Activated T-helper 2 cell treated with anti-CD3 and anti-CD28 coated beads, Interferon-gamma antibody, Interleukin-2, Interleukin-4, amounts not matched to agents 10 μg/mL and 5 μg/mL and 100 μg/mL, durations not matched to agents 14 hours and 24 hours and 36 hours (primary cell): ENCODE measurements at regions of chr9 and their contacts with region 1.

Region 1: DNA sequence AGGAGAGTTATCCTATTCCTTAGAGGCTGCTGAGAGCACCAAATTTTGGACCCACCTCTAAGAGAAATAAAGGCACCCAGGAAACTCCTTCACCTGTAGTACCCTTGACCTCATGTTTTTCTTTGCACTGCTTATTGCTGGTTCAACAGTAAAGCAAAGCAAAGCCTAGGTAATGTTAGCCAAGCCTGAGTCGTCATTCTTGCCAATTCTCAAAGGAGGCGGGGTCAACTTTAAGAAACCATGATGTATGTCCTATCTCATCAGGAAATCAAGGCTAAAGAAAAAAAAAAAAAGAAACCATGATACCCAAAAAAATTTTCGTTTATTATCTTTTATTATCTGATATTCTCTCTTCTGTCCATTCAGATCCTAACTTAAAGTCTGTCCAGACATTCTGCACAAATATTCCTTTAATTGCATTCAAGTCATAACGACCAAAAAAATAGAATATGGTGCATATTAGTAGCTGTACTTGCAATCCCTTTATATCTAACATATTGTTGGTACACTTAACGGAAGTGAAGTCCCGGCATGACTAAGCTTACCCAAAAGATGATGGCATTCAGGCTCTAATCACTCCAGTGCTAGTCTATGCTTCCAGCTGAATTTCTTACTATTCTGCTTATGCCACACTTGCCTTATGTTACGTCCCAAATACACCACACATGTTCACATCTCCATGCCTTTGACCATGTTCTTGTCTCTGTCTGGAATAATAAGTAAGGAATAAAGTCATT is 1.8 kb downstream of the AUH start:
- DNase-seq: no peak
- H3K4me3 Mint-ChIP-seq: peak overlapping the region; percentile 98
- H3K27ac Mint-ChIP-seq: peak overlapping the region; percentile 99
- H3K4me1 Mint-ChIP-seq: peaks cover 64% of the 10 kb centered on the region
- H3K27me3 Mint-ChIP-seq: no peaks in the 10 kb centered on the region

Region 2: DNA sequence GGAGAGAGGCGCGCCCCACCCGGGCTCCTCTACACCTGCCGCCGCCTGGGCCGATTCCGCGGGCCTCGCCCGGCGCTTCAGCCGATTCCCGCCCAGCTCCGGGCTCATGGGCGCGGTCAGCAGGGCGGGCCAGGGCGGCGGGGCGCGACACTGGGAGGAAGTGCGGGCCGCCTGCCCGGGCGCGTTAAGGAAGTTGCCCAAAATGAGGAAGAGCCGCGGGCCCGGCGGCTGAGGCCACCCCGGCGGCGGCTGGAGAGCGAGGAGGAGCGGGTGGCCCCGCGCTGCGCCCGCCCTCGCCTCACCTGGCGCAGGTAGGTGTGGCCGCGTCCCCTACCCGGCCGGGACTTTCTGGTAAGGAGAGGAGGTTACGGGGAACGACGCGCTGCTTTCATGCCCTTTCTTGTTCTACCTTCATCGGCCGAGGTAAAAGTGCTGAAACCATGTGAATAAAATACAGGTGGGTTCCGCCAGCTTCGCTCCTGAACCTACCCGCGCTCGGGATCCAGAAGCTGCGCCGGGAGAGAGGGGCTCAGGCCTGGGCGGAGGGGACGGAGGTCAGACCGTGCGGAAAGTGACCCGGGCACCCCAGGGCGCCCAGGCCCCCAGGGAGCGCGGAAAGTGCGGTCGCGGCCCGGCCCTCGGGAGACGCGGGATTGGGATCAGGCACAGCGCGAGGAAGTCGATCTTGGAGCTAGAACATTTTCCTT is 558.2 kb before region 1 on chr9 and contains the start of gene SYK:
- intact Hi-C with region 1: no loop called
- DNase-seq: no peak
- H3K4me3 Mint-ChIP-seq: peak within 1 kb of the TSS; percentile 43
- H3K27ac Mint-ChIP-seq: no peak within 1 kb of the TSS
- H3K4me1 Mint-ChIP-seq: peaks cover 1% of the 10 kb centered on the region
- H3K27me3 Mint-ChIP-seq: peaks cover 77% of the 10 kb centered on the region
- total RNA-seq, gene SYK: 0.23 and 0.80 TPM in 2 replicates

Region 3: GRCh38 chr9:91101611-91102168 is 258.2 kb before region 1 on chr9:
- intact Hi-C with region 1: loop called (anchors 5 kb)
- DNase-seq: peak; percentile 85
- H3K4me3 Mint-ChIP-seq: peak overlapping the region; percentile 78
- H3K27ac Mint-ChIP-seq: peak overlapping the region; percentile 93
- H3K4me1 Mint-ChIP-seq: peaks cover 64% of the 10 kb centered on the region
- H3K27me3 Mint-ChIP-seq: no peaks in the 10 kb centered on the region

Region 4: GRCh38 chr9:91341239-91341746 is 18.6 kb before region 1 on chr9:
- intact Hi-C with region 1: loop called (anchors 2 kb)
- DNase-seq: no peak
- H3K4me3 Mint-ChIP-seq: peak overlapping the region; percentile 65
- H3K27ac Mint-ChIP-seq: peak overlapping the region; percentile 90
- H3K4me1 Mint-ChIP-seq: peaks cover 72% of the 10 kb centered on the region
- H3K27me3 Mint-ChIP-seq: no peaks in the 10 kb centered on the region

Region 5: DNA sequence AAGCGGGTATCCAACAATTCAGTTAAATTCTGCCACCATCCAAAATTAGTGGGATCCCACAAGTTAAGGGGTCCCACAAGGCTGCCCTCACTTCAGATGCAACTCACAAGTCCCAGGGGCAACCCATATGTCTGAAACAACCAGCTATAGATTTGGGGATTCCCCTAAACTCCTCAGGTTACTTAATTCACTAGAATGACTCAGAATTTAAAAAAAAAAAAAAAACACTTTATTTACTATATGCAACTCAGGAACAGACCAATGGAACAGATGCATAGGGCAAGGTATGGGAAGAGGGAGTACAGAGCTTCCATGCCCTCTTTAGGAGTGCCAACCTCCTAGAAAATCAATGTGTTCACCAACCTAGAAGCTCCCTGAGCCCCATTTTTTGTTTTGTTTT is 13.2 kb before region 1 on chr9:
- intact Hi-C with region 1: loop called (anchors 1 kb)
- DNase-seq: no peak
- H3K4me3 Mint-ChIP-seq: no peak overlapping the region
- H3K27ac Mint-ChIP-seq: peak overlapping the region; percentile 44
- H3K4me1 Mint-ChIP-seq: peaks cover 61% of the 10 kb centered on the region
- H3K27me3 Mint-ChIP-seq: no peaks in the 10 kb centered on the region

Region 6: DNA sequence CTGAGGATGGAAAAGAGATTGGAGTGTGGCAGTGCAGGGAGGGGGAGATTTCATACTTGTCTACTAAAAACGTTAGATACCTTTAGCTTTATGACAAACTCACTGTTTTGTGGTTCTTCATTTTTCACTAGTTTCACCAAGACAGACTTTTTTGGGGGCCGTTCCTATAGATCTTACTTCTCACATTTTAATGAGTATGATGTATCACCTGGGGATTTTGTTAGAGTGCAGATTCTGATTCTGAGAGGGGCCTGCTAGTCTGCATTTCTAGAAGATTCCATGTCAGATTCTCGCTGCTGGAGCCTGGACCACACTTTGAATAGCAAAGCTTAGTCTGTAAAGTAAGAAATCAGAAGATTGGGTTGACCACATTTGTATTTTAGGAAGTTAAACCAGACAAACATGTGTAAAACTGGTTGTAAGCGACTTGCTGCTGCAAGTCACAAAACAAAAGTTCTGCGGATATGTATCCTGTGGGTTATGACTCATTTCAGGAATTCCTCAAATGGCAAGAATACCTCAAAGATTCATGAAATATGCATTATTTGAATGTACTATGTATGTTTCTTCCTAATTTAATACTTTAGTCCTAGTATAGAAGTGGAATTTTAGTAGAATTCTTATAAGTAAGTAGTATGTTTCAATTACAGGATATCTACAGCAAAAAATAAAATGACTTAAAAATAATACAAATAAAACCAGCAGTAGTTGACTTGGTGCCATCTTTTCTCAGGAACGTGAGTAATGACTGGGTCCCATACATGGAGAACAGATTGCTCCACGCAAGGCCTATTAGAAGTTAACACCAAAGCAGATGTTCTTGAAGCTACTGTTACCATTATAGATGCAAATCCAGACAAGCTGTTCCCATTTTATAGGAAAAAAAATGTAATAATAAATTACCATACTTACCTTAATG is 35.9 kb after region 1 on chr9:
- intact Hi-C with region 1: loop called (anchors 1 kb)
- DNase-seq: peak; percentile 26
- H3K4me3 Mint-ChIP-seq: peak overlapping the region; percentile 54
- H3K27ac Mint-ChIP-seq: peak overlapping the region; percentile 86
- H3K4me1 Mint-ChIP-seq: peaks cover 24% of the 10 kb centered on the region
- H3K27me3 Mint-ChIP-seq: no peaks in the 10 kb centered on the region

Region 7: GRCh38 chr9:91458899-91459298 is 99.0 kb after region 1 on chr9:
- intact Hi-C with region 1: no loop called
- DNase-seq: no peak
- H3K4me3 Mint-ChIP-seq: no peak overlapping the region
- H3K27ac Mint-ChIP-seq: no peak overlapping the region
- H3K4me1 Mint-ChIP-seq: no peaks in the 10 kb centered on the region
- H3K27me3 Mint-ChIP-seq: peaks cover 49% of the 10 kb centered on the region

Region 8: GRCh38 chr9:91536211-91536691 is 176.3 kb after region 1 on chr9:
- intact Hi-C with region 1: no loop called
- DNase-seq: no peak
- H3K4me3 Mint-ChIP-seq: no peak overlapping the region
- H3K27ac Mint-ChIP-seq: no peak overlapping the region
- H3K4me1 Mint-ChIP-seq: peaks cover 14% of the 10 kb centered on the region
- H3K27me3 Mint-ChIP-seq: peaks cover 19% of the 10 kb centered on the region

Region 9: DNA sequence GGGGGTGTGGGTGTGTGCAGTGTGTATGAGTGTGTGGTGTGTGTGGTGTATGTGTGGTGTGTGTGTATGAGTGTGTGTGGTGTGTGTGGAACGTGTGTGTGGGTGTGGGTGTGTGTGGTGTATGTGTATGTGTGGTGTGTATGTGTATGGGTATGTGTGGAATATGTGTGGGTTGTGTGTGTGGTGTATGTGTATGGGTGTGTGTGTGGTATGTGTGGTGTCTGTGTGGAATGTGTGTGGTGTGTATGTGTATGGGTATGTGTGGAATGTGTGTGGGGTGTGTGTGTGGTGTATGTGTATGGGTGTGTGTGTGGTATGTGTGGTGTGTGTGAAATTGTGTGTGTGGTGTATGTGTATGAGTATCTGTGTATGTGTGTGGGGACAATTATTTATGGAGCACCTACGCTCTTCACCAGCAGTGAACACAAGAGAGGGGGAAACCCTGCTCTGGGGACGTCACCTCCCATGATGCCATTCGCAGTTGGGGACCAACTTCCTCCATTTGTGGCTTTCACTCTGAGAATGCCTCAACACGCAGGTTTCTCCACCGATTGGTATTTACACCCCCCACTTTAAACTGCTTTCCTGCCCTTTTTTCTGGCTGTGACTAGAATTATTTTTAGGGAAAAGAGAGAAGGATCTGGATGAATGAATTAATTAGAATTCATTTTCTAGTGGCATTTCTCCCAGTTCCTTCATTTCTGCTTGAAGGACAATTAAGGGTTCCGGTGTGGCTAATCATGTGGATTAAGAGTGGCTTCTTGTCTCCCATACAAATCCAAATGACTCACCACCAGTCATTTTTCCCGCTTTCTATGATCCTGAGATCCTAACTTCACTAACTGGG is 352.1 kb after region 1 on chr9:
- intact Hi-C with region 1: loop called (anchors 5 kb)
- DNase-seq: peak; percentile 72
- H3K4me3 Mint-ChIP-seq: no peak overlapping the region
- H3K27ac Mint-ChIP-seq: no peak overlapping the region
- H3K4me1 Mint-ChIP-seq: peaks cover 18% of the 10 kb centered on the region
- H3K27me3 Mint-ChIP-seq: peaks cover 8% of the 10 kb centered on the region